Gastrocnemius medialis (tissue), 4 donors: ENCODE measurements at regions of chr15 and their contacts with region 1.

Region 1: GRCh38 chr15:81859737-81860516 is 185.9 kb downstream of the MEX3B start:
- DNase-seq: peak; percentile 36 to 46
- ATAC-seq: peak; percentile 83 to 94
- H3K4me3 ChIP-seq: no peak overlapping the region
- H3K27ac ChIP-seq: peak overlapping the region in 3 of 4 donors; percentile 33 to 59 (median 59)
- H3K4me1 ChIP-seq: peaks cover 11 to 18% of the 10 kb centered on the region in 2 donors
- H3K27me3 ChIP-seq: no peaks in the 10 kb centered on the region
- CTCF ChIP-seq: no peak
- POLR2A ChIP-seq: no peak

Region 2: GRCh38 chr15:81274931-81275707 is 584.8 kb before region 1 on chr15:
- in situ Hi-C with region 1: no loop called
- intact Hi-C with region 1: no loop called
- DNase-seq: peak; percentile 32 to 33
- ATAC-seq: peak; percentile 68 to 82
- H3K4me3 ChIP-seq: no peak overlapping the region
- H3K27ac ChIP-seq: no peak overlapping the region
- H3K4me1 ChIP-seq: no peaks in the 10 kb centered on the region
- H3K27me3 ChIP-seq: no peaks in the 10 kb centered on the region
- CTCF ChIP-seq: peak; percentile 58 to 80 (median 76)
- POLR2A ChIP-seq: no peak

Region 3: GRCh38 chr15:81914734-81915256 is 54.9 kb after region 1 on chr15:
- in situ Hi-C with region 1: no loop called
- intact Hi-C with region 1: loop called (anchors 2 kb)
- DNase-seq: peak in 1 of 2 donors; percentile 31
- ATAC-seq: peak in 1 of 2 donors; percentile 60
- H3K4me3 ChIP-seq: no peak overlapping the region
- H3K27ac ChIP-seq: peak overlapping the region in 3 of 4 donors; percentile 2 to 63 (median 55)
- H3K4me1 ChIP-seq: peaks cover 22 to 27% of the 10 kb centered on the region in 2 donors
- H3K27me3 ChIP-seq: no peaks in the 10 kb centered on the region
- CTCF ChIP-seq: no peak
- POLR2A ChIP-seq: no peak